GM10248 (cell line): ENCODE measurements at regions of chr1 and their contacts with region 1.

Region 1: GRCh38 chr1:207404849-207405525 is 49.1 kb upstream of the CR2 start:
- DNase-seq: peak; percentile 62
- CTCF ChIP-seq: peak; percentile 68

Region 2: GRCh38 chr1:207077470-207078377 is 327.3 kb before region 1 on chr1:
- CTCF ChIA-PET with region 1: interaction called, 73 read pairs
- POLR2A ChIA-PET with region 1: no interaction called
- DNase-seq: peak; percentile 66
- CTCF ChIP-seq: peak; percentile 86

Region 3: GRCh38 chr1:207321079-207321789 is 83.8 kb before region 1 on chr1 and contains the start of gene CD55:
- CTCF ChIA-PET with region 1: interaction called, 16 read pairs
- POLR2A ChIA-PET with region 1: no interaction called
- DNase-seq: peak; percentile 94
- CTCF ChIP-seq: peak; percentile 29

Region 4: GRCh38 chr1:207393610-207394009 is 11.4 kb before region 1 on chr1:
- CTCF ChIA-PET with region 1: interaction called, 15 read pairs
- POLR2A ChIA-PET with region 1: no interaction called
- DNase-seq: no peak
- CTCF ChIP-seq: no peak

Region 5: GRCh38 chr1:207429963-207430362 is 25.0 kb after region 1 on chr1:
- CTCF ChIA-PET with region 1: interaction called, 19 read pairs
- POLR2A ChIA-PET with region 1: no interaction called
- DNase-seq: peak; percentile 36
- CTCF ChIP-seq: no peak

Region 6: DNA sequence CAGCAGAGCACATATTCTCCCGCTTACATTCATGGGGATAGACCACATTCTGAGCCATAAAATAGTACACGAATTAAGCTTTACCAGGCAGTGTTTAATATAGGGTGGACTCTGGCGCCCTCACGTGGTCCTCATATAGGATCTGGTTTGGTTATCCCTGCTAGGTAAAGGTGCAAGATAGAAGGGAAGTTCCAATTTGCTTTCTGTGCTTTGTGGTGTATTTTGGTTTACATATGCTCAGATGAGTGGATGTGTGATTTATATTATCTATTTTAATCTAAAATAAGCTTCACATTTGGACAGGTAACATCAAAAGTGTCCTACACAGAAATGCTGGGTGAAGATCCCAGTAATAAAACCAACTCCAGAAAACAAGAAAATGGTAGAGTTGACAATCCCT is 94.6 kb after region 1 on chr1:
- CTCF ChIA-PET with region 1: interaction called, 17 read pairs
- POLR2A ChIA-PET with region 1: interaction called, 3 read pairs
- DNase-seq: peak; percentile 46
- CTCF ChIP-seq: peak; percentile 82